ENCODE measurements at regions of chr10 and their contacts with region 1.

Region 1: DNA sequence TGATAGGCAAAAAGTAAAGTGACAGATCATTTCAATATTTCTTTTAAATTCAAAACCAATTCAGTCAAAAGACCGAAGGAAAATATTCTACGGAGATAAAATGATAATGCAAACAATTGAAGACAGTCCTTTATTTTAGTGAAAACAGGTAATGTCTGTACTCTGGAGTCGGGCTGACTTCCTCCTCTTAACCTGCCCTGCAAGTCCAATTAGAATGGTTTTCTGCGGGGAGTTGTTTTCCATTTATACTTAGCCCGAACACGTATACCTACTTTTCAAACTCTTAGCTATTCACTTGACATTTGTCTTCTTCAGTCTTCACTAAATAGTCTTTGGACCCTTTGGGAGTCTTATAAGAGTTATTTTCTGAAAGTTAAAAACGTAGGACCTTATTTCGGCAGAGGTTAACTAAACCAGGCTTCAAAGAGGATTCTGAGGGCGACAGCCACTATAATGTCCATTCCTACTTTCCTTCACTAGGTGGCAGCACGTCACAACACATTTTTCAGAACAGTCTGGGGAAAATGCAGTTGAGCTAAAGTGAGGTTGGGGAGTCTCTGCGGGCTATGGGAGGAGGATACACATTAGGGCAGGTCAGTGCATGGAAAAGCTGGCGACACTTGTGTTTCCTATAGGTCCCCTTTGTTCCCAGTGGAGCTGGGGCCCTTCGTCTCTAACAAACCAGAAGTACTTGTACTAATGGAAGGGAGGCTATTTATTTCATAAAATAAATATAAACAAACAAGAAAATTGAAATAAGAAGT is 472.0 kb downstream of the KCNMA1 start:
- DNase-seq: peak; percentile 22 to 50 (median 35)
- H3K4me3 ChIP-seq: no peak overlapping the region
- H3K4me3 Mint-ChIP-seq: peak overlapping the region in 1 of 2 donors; percentile 40
- H3K27ac ChIP-seq: no peak overlapping the region
- H3K27ac Mint-ChIP-seq: no peak overlapping the region
- H3K4me1 ChIP-seq: no peaks in the 10 kb centered on the region
- H3K4me1 Mint-ChIP-seq: peaks cover 9% of the 10 kb centered on the region
- H3K27me3 ChIP-seq: peaks cover 9 to 16% of the 10 kb centered on the region in 2 donors
- H3K27me3 Mint-ChIP-seq: peaks cover 13 to 41% (median 19%) of the 10 kb centered on the region in 3 donors
- CTCF ChIP-seq: peak; percentile 84

Region 2: DNA sequence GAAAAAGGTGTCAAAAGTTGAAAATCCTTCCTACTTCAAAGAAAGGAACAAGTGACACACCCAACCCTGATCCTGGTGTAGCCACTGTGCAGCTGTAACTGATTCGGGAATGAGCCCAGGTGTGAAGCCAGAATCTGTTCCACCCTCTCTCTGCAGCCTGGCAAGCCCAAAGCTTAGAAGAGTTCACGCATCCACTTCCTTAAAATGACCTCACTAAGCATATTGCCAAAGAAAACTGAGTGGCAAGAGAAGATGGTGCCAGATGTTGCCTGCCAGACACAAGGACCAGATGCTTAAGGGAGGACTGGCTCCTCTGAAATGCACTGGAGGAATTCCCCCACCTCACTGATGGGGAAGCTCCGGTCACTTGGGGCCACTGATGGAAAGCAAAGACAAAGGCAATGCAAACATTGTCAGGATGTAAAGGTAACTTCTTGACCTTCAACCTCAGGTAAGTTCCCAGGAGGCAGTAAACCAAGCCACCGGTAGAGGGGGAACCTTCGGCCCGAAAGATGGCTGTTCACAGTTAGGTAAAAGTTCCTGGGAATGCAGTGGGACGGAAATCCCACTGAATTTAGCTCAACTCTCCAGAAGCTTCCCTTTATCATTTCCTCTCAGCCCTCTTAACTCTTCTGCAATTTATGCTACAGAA is 82.9 kb before region 1 on chr10:
- intact Hi-C with region 1: no loop called
- DNase-seq: peak in 1 of 3 donors; percentile 14
- H3K4me3 ChIP-seq: no peak overlapping the region
- H3K4me3 Mint-ChIP-seq: no peak overlapping the region
- H3K27ac ChIP-seq: no peak overlapping the region
- H3K27ac Mint-ChIP-seq: peak overlapping the region in 2 of 7 donors; percentile 45 to 67
- H3K4me1 ChIP-seq: peaks cover 15 to 22% of the 10 kb centered on the region in 2 donors
- H3K4me1 Mint-ChIP-seq: peaks cover 20% of the 10 kb centered on the region
- H3K27me3 ChIP-seq: no peaks in the 10 kb centered on the region
- H3K27me3 Mint-ChIP-seq: peaks cover 0 to 2% (median 1%) of the 10 kb centered on the region in 3 donors
- CTCF ChIP-seq: no peak

Region 3: DNA sequence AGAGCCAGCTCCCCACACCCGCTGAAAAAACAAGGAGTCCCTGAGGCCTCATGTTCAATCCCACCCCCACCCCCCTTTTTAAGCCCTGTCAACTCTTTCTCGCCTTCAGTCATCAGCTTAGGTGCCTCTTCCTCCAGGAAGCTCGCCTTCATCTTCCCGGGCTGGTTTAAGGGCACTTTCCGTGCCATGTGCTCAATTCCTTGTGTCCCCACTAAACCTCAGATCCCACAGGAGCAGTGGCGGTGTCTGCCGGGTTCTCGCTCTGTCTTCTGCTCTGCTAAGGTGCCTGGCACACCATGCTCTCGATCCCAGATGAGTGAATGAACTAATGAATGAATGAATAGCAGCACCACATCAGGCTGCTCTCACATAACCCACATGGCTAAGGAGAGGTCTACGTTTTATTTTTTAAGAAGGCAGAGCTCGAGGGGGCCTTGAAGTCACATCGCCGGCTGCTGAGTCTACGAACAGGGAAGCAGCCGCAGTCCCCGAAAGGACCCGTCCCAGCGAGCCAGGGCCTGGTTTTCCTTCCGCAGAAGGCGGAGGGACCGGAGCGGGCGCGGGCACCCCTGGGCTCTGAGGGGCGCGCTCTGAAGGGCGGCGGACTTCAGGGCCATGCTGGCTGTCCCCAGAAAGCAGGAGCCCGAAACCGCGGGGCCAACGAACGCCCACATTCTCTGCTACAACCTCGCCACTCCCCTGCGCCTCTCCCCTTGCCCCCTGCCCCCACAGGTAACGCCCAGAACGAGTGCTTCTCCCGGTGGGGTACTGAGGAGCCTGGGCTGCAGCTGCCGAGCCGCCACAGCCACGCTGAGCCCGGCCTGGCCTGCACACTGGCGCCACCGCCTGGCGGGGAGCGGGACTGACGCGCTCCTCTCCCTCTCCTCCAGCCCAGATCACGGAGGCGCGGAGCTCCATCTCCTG is 545.4 kb after region 1 on chr10:
- intact Hi-C with region 1: loop called (anchors 5 kb)
- DNase-seq: peak; percentile 46 to 60 (median 58)
- H3K4me3 ChIP-seq: peak overlapping the region; percentile 0 to 68 (median 32)
- H3K4me3 Mint-ChIP-seq: peak overlapping the region; percentile 69 to 89
- H3K27ac ChIP-seq: no peak overlapping the region
- H3K27ac Mint-ChIP-seq: peak overlapping the region in 2 of 7 donors; percentile 33 to 78
- H3K4me1 ChIP-seq: peaks cover 8 to 9% of the 10 kb centered on the region in 2 donors
- H3K4me1 Mint-ChIP-seq: peaks cover 10% of the 10 kb centered on the region
- H3K27me3 ChIP-seq: peaks cover 2 to 37% of the 10 kb centered on the region in 2 donors
- H3K27me3 Mint-ChIP-seq: peaks cover 23 to 46% (median 24%) of the 10 kb centered on the region in 3 donors
- CTCF ChIP-seq: peak; percentile 98

Measured in CD14-positive monocyte (primary cell).